ENCODE measurements at regions of chrX and their contacts with region 1.

Region 1: GRCh38 chrX:45515262-45516215 is 314.9 kb upstream of the DIPK2B start:
- DNase-seq: peak; percentile 70
- H3K4me3 Mint-ChIP-seq: peak overlapping the region; percentile 27
- H3K27ac Mint-ChIP-seq: peak overlapping the region; percentile 84
- H3K4me1 Mint-ChIP-seq: peaks cover 15% of the 10 kb centered on the region
- H3K27me3 Mint-ChIP-seq: no peaks in the 10 kb centered on the region

Region 2: DNA sequence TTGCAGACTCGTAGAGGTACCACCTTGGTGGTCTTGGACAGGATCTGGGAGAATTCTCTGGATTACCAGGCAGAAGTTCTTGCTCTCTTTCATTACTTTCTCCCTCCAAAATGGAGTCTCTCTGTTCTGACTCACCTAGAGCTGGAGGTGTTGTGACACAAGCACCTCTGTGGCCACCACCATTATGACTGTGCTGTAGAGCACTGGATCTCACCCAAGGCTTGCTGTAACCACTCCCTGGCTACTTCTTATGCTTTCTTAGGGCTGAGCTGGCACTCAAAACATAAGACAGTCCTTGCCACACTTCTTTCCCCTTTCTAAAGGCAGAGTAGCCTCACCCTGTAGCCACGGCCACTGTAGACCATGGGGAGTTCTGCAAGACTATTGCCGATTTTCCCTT is 18.2 kb before region 1 on chrX:
- intact Hi-C with region 1: no loop called
- DNase-seq: no peak
- H3K4me3 Mint-ChIP-seq: no peak overlapping the region
- H3K27ac Mint-ChIP-seq: no peak overlapping the region
- H3K4me1 Mint-ChIP-seq: no peaks in the 10 kb centered on the region
- H3K27me3 Mint-ChIP-seq: no peaks in the 10 kb centered on the region

Region 3: GRCh38 chrX:45621376-45622041 is 106.0 kb after region 1 on chrX:
- intact Hi-C with region 1: loop called (anchors 2 kb)
- DNase-seq: peak; percentile 51
- H3K4me3 Mint-ChIP-seq: peak overlapping the region; percentile 35
- H3K27ac Mint-ChIP-seq: peak overlapping the region; percentile 89
- H3K4me1 Mint-ChIP-seq: peaks cover 18% of the 10 kb centered on the region
- H3K27me3 Mint-ChIP-seq: no peaks in the 10 kb centered on the region

Region 4: DNA sequence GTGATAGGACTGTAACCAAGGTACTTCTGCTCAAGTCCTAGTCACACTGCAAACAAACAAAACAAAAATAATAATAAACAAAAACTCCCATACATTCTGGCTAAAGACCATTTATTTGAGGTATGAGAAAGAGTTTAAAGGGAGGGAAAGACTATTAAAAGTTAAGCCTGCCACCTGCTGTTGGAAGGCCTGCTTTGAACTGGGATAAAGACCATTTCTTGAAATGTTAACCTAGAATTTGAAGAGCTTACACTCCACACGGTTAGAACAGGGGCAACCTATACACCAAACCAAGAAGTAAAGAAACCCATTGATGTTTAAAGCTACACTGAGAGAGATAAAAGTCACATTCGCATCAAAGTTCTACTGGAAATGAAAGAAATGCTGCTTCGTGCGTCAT is 233.8 kb after region 1 on chrX:
- intact Hi-C with region 1: loop called (anchors 5 kb)
- DNase-seq: no peak
- H3K4me3 Mint-ChIP-seq: peak overlapping the region; percentile 21
- H3K27ac Mint-ChIP-seq: peak overlapping the region; percentile 39
- H3K4me1 Mint-ChIP-seq: peaks cover 32% of the 10 kb centered on the region
- H3K27me3 Mint-ChIP-seq: no peaks in the 10 kb centered on the region

Region 5: GRCh38 chrX:46376246-46376885 is 860.8 kb after region 1 on chrX:
- intact Hi-C with region 1: loop called (anchors 10 kb)
- DNase-seq: peak; percentile 73
- H3K4me3 Mint-ChIP-seq: no peak overlapping the region
- H3K27ac Mint-ChIP-seq: no peak overlapping the region
- H3K4me1 Mint-ChIP-seq: peaks cover 3% of the 10 kb centered on the region
- H3K27me3 Mint-ChIP-seq: peaks cover 7% of the 10 kb centered on the region

Measured in activated CD4-positive, alpha-beta T cell treated with anti-CD3 and anti-CD28 coated beads, Interleukin-2, amount 10 ng/mL, durations not matched to agents 24 days and 14 days (primary cell).